Right ventricle myocardium inferior (tissue), 1 donor: ENCODE measurements at regions of chr14 and their contacts with region 1.

Region 1: DNA sequence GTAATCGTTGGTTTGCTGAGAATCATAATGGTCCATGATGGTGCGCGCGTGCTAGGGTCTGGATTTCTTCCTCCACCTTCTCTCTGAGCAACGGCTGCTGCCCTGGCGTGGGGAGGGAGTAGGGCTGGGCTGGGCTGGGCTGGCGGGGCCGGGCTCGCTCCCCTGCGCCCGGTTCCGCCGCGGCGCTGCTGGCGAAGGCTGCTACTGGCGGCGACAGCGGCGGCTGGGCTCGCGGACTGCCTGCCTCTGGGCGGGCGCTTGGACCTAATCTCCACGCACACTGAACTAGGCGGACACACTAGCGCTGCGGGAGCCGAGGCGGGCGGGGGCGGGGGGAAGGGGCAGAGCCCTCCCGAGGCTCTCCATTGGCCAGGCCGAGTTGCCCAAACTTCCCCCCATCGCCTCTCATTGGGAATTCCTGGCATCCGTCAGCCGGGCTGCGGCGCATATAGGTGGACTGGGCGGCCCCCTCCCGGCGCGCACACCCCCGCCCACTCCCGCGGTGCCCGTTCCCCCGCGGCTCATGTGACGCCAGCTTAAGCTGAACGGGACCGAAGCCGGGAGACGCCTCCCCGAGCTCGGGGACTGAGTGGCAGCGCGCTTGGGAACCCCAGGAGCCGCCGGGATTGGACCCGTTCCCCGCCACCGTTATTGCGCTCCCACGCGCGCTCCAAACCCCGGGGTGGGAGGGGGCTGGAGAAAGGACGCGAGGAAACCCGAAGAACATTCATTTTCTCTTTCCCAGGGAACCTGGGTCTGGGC is at the start of gene ACTN1:
- DNase-seq: peak; percentile 97
- ATAC-seq: peak; percentile 90
- total RNA-seq, gene ACTN1: 136 TPM

Region 2: DNA sequence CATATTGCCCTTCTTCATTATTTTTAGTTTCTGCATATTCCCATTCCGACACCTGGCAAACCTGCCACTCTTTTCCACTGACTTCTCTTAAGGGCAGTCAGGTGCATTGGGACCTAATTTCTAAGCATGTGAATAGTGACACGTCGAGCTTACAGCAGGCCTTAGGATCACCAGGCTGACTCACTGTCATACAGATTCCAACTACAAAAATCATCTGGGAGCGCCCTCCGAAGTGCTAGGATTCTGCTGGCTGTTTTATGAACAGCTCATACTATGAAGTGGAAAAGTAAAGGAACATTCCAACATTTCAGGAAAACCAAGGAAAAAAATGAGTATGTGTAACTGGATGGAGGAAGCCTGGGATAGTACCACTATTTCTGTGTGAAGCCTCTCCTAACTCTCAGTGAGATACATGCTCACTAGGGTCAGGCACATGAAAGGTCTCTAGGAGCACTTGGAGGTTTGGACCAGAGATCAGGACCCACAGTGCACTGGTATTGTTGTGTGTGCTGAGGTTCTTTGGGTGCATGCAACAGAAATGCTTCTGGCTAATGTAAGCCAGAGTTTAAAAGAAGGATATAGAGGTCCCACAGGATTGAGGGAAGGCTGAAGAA is 443.7 kb before region 1 on chr14:
- intact Hi-C with region 1: no loop called
- DNase-seq: no peak
- ATAC-seq: no peak

Region 3: DNA sequence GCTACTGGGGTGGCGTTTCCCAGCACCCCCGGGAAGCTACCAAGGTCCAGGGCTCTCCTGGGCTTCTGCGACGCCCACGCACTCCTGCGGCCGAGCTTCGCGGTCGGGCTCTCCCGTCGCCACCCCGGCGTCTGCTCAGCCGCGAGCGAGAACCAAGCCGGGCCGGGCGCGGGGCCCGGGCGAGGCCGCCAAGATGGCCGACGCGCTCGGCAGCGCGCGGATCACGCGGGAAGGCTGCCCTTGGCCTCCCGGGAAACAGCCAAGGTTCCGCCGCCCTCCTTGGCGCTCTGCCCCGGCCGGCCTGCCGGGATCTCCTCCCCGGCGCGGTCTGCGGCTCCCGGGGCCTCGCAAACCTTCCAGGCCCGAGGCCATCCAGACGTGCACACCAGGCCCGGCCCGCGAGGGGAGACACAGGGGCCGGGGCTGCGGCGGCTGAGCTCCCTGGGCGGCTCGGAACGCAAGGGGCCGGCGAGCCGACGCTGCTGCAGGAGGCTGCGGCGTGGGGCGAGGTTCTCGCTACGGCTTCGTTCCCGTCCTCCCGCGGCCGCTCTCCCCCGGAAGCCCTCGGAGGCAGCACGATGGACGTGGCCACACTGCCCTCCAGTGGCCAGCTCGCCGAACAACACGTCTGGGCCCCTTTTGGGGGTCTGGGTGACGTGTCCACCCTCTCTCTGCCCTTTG is 162.8 kb before region 1 on chr14:
- intact Hi-C with region 1: no loop called
- DNase-seq: peak; percentile 96
- ATAC-seq: peak; percentile 94

Region 4: DNA sequence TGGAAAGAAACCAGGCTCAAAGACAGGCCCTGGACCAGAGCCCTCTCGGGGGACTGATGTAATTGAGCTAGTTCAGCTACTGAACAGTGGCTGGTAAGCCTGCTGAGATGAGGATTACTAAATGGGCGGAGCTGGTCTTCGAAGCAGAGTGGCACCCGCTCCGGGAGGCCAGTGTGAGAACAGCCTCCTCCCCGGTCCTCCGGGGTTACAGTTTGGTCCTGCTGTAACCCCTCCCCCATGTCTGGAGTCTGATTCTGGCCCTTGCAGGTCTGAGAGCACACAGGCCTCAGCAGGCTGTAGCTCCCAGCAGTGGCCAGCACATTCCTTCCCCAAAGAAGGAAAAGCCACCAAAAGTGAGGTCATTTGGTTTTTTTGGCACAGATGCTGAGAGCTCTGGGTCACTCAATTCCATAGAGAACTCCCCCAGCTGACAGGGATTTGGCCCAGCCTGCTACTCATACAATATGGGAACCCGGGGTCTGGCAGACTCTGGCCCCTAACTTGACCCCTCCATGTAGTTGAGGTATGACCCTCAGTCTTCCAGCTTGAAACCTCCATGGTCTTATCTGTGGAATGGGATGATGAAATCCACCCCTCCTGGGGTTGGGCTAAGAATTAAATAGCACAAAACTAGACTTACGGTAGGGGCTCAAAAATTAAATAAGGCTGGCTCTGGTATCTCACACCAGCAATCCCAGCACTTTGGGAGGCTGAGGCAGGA is 39.1 kb before region 1 on chr14:
- intact Hi-C with region 1: loop called (anchors 2 kb)
- DNase-seq: peak; percentile 85
- ATAC-seq: peak; percentile 84

Region 5: GRCh38 chr14:69048456-69048855 is 69.3 kb after region 1 on chr14:
- intact Hi-C with region 1: loop called (anchors 5 kb)
- DNase-seq: no peak
- ATAC-seq: no peak

Region 6: DNA sequence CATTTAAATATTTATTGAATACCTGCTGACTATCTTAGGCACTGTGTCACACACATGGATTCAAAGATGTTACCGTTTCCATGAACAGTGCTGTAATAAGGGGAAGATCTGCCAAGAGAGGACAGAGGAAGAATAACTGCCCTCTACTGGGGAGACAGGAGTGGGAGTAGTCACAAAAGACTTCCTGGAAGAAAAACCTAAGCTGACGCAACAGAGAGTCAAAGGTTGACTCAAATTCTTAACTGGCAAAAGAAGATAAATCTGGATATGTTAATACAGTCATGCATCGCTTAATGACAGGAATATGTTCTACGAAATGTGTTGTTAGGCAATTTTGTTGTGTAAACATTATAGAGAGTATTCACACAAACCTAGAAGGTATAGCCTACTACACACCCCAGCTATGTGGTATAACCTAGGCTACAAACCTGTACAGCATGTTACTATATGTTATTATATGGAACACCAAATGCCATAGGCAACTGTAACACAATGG is 122.2 kb after region 1 on chr14:
- intact Hi-C with region 1: loop called (anchors 5 kb)
- DNase-seq: no peak
- ATAC-seq: peak; percentile 84